ENCODE measurements at regions of chr1 and their contacts with region 1.

Region 1: DNA sequence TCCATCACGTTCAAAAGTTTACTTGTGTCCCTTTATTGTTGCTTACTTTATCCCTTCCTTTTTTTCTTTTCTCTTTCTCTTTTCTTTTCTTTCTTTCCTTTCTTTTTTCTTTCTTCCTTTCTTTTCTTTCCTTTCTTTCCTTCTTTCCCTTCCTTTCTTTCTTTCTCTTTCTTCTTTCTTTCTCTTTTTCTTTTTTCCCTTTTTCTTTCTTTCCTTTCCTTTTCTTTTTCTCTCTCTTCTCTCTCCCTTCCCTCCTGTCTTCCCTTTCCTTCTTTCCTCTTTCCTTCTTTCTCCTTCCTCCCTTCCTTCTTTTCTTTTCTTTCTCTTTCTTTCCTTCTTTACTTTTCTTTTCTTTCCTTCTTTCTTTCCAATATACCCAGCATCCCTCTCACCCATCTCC is 391.2 kb downstream of the DPYD start:
- DNase-seq: no peak
- ATAC-seq: no peak

Region 2: DNA sequence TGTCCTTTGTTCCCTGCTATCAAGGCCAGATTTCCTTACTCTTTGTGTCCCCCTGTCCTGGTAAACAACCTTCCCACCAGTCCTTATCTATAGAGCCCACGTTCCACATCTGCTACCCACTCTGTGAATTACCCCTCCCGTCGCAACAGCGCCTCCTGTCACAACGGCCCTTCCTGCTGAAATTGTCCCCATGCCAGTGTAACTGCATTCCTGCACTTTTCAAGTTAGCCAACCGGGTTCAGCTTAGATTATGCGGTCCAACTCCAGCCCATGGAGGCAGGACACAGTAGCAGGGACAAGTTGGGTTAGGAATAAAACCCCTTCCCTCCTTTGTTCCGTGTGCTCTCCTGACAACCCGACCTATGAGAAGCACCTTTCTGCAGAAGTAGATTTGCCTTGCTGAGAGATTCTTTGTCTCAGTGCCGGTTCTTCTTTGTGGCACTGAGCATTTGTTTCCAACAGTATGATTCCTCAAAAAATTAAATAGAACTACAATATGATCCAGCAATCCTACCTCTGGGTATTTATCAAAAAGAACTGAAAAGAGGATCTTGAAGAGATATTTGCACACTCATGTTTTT is 627.7 kb before region 1 on chr1:
- intact Hi-C with region 1: no loop called
- DNase-seq: no peak
- ATAC-seq: no peak

Region 3: DNA sequence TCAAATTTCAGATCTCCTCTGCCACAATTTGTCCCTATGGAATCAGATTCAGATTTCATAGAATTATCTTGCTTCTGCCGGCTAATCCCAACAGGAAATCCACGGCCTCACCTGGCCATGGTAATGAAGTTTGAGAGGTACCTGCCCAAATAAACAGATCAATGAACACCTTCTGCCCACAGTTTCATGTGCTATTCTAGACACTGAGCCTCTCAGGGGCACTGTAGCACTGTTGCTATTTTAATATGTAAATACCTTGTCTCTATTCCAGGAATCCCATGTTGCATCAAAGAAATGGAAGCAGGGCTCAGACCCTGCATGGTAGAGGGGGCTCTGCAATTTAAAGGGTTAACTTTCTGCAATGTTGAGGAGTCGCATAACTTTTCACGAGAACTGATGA is 214.9 kb before region 1 on chr1:
- intact Hi-C with region 1: loop called (anchors 5 kb)
- DNase-seq: no peak
- ATAC-seq: peak; percentile 31

Region 4: DNA sequence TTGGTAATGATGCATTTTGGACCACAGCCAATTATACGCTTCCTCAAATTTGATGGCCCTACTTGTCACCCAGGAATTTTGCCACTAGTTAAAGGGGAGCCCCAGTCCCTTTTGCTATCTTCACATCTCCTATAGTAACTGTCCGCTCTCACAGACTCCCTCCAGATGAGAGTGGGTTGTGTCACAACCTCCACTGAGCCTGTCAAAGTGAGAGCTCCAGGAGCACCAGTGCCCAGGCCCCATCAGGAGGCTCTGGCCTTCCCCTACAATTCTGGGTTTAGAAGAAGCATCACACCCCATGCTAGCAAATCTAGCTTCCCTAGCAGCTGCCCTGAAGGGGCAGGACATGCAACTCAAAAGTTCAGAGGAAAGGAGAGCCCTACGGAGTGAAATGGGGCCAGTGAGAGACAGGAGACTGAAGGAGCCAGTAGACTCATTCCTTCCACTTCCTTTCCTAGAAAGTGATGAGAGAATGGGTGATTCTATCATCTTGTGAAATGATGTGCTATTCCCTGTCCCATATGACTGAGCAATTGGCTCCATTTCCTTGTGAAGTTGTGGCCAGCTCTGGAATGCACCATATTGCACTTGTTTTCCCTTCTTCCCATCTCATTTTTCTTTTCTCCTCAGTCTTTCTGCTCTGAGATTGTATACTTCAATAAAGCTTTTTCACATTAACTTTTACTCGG is 150.1 kb before region 1 on chr1:
- intact Hi-C with region 1: no loop called
- DNase-seq: no peak
- ATAC-seq: no peak

Region 5: GRCh38 chr1:97573560-97573959 is 44.0 kb after region 1 on chr1:
- intact Hi-C with region 1: no loop called
- DNase-seq: no peak
- ATAC-seq: no peak

Measured in Right ventricle myocardium inferior (tissue), 1 donor.